ENCODE measurements at regions of chr10 and their contacts with region 1.

Region 1: GRCh38 chr10:22648547-22648961 is 65.8 kb downstream of the PIP4K2A start:
- DNase-seq: peak in 2 of 9 experiments; percentile 42 to 63
- ATAC-seq: no peak
- H3K4me3 ChIP-seq: peak overlapping the region; percentile 3 to 28
- H3K4me3 Mint-ChIP-seq: peak overlapping the region; percentile 81
- H3K27ac ChIP-seq: peak overlapping the region; percentile 17 to 74
- H3K27ac Mint-ChIP-seq: peak overlapping the region; percentile 91
- H3K4me1 ChIP-seq: peaks cover 98% of the 10 kb centered on the region
- H3K4me1 Mint-ChIP-seq: peaks cover 94% of the 10 kb centered on the region
- H3K27me3 ChIP-seq: no peaks in the 10 kb centered on the region
- H3K27me3 Mint-ChIP-seq: no peaks in the 10 kb centered on the region
- CTCF ChIP-seq: no peak

Region 2: DNA sequence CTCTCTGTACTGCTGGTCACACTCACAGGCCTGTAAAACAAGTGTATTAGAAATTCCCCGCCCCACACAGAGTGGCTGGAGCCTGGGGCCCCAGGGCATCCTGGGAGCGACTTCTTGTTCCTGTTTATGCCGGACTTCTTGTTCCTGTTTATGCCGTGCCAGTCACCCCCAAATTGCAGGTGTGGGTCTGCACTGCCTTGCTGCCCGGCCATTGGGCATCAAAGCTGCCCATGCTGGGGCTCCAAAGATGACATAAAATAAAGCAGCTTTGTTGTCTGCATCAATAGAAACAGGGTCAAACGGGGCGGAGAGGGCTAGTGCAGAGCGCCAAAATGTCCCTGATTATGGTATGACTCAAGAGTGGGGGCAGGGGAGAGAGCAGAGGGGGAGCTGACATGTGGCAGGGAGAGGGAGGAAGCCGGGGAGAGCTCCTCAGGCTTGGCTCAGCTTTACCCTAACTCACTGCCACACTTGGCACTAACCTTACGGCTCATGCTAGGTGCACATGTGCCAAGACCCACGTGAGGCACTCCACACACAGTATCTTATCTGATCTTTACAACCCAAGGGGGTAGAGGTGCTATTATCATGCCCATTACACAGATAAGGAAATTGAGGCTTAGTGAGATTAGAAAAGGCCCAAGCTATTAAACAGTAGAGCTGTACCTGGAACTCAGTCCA is 32.6 kb before region 1 on chr10:
- CTCF ChIA-PET with region 1: interaction called, 6 read pairs
- POLR2A ChIA-PET with region 1: interaction called, 11 read pairs
- intact Hi-C with region 1: loop called in 1 of 2 experiments (anchors 2 kb)
- DNase-seq: peak in 5 of 9 experiments; percentile 38 to 85 (median 59)
- ATAC-seq: peak; percentile 20
- H3K4me3 ChIP-seq: peak overlapping the region in 1 of 2 experiments; percentile 15
- H3K4me3 Mint-ChIP-seq: peak overlapping the region; percentile 71
- H3K27ac ChIP-seq: peak overlapping the region; percentile 15 to 90
- H3K27ac Mint-ChIP-seq: peak overlapping the region; percentile 92
- H3K4me1 ChIP-seq: peaks cover 91% of the 10 kb centered on the region
- H3K4me1 Mint-ChIP-seq: peaks cover 98% of the 10 kb centered on the region
- H3K27me3 ChIP-seq: no peaks in the 10 kb centered on the region
- H3K27me3 Mint-ChIP-seq: no peaks in the 10 kb centered on the region
- CTCF ChIP-seq: no peak

Region 3: DNA sequence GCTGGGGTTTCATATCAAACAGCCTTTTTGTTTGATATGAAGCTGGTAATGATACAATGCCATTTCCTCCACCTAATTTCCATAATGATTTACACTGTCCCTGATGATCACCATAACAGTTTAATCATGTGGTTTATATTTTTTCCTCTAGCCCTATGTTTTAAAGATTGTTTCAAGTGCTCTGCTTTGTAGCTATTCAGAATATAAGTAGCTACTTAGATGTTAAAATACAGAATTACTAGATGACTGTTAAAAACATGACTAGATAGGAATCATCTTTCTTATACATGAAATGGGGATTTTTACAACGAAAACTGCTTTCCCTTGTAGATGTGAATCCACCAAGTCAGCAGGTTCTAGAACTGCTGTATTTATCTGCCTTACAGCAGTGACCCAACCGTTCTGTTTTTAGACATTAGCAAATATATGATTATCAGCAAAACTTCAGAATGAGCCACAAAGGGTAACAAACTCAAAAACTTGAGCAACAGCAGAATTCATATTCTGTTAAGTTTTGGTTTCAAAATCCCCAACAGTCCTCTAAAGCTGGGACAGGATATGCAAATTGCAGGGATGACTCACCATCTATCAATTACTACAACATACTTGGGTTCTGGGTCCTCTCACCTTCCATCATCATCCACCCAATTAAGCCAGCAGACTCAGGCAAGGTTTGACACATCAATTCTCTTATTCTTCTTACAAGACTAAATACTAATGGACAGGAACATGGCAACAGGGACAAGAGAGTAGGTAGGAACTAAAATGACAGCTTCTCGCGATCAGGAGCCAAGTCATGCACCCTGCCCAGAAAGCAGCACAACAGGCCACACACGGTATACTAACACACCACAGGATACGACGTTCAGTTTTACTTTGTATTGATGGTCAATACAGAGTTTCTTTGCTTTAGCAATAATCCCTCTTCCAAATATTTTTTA is 18.1 kb before region 1 on chr10:
- CTCF ChIA-PET with region 1: interaction called, 7 read pairs
- POLR2A ChIA-PET with region 1: interaction called, 13 read pairs
- intact Hi-C with region 1: loop called (anchors 1 to 2 kb)
- DNase-seq: peak in 4 of 9 experiments; percentile 39 to 91 (median 68)
- ATAC-seq: peak; percentile 79
- H3K4me3 ChIP-seq: peak overlapping the region; percentile 16 to 21
- H3K4me3 Mint-ChIP-seq: peak overlapping the region; percentile 72
- H3K27ac ChIP-seq: peak overlapping the region; percentile 16 to 81
- H3K27ac Mint-ChIP-seq: peak overlapping the region; percentile 97
- H3K4me1 ChIP-seq: peaks cover 96% of the 10 kb centered on the region
- H3K4me1 Mint-ChIP-seq: peaks cover 96% of the 10 kb centered on the region
- H3K27me3 ChIP-seq: no peaks in the 10 kb centered on the region
- H3K27me3 Mint-ChIP-seq: no peaks in the 10 kb centered on the region
- CTCF ChIP-seq: no peak

Region 4: GRCh38 chr10:22666287-22667092 is 17.9 kb after region 1 on chr10:
- CTCF ChIA-PET with region 1: interaction called, 4 read pairs
- POLR2A ChIA-PET with region 1: interaction called, 8 read pairs
- intact Hi-C with region 1: loop called in 1 of 2 experiments (anchors 2 kb)
- DNase-seq: peak; percentile 30 to 92 (median 67)
- ATAC-seq: peak; percentile 84
- H3K4me3 ChIP-seq: peak overlapping the region; percentile 29 to 42
- H3K4me3 Mint-ChIP-seq: peak overlapping the region; percentile 79
- H3K27ac ChIP-seq: peak overlapping the region; percentile 41 to 67
- H3K27ac Mint-ChIP-seq: peak overlapping the region; percentile 90
- H3K4me1 ChIP-seq: peaks cover 87% of the 10 kb centered on the region
- H3K4me1 Mint-ChIP-seq: peaks cover 83% of the 10 kb centered on the region
- H3K27me3 ChIP-seq: no peaks in the 10 kb centered on the region
- H3K27me3 Mint-ChIP-seq: no peaks in the 10 kb centered on the region
- CTCF ChIP-seq: no peak

Region 5: DNA sequence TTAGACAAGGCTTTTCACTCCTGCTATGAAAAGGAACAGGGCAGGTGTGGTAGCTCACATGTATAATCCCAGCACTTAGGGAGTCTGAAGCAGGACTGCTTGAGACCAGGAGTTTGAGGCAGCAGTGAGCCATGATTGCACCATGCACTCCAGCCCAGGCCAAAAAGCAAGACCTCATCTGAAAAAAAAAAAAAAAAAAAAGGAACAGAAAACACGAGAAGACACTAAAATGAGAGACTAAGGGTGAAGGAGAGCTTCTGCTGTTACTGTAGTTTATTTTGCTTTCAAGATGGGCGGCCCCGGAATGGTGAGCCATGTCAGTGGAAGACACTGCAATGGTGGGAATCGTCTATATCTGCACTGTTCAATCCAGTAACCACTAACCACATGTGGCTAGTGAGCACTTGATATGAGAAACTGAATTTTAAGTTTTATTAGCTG is 55.9 kb after region 1 on chr10:
- CTCF ChIA-PET with region 1: interaction called, 3 read pairs
- POLR2A ChIA-PET with region 1: interaction called, 6 read pairs
- intact Hi-C with region 1: loop called in 1 of 2 experiments (anchors 2 kb)
- DNase-seq: no peak
- ATAC-seq: no peak
- H3K4me3 ChIP-seq: no peak overlapping the region
- H3K4me3 Mint-ChIP-seq: peak overlapping the region; percentile 52
- H3K27ac ChIP-seq: peak overlapping the region in 1 of 2 experiments; percentile 37
- H3K27ac Mint-ChIP-seq: peak overlapping the region; percentile 91
- H3K4me1 ChIP-seq: peaks cover 94% of the 10 kb centered on the region
- H3K4me1 Mint-ChIP-seq: peaks cover 96% of the 10 kb centered on the region
- H3K27me3 ChIP-seq: no peaks in the 10 kb centered on the region
- H3K27me3 Mint-ChIP-seq: no peaks in the 10 kb centered on the region
- CTCF ChIP-seq: no peak

Region 6: DNA sequence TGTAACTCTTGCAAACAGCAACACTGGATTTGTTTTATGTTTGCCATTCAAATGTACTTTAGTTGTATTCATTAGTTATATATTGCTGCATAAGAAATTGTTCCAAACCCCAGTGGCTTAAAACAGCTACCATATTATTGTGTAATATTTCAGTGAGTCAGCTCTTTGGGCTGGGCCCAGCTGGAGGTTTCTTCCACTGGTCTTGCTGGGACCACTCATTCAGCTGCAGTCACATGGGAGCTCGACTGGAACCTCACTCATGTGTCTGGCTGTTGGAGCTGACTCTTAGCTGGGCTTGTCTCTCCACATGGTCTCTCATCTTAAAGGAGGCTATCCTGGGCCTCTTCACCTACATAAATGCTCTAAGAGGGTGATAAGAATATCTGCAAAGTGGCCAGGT is 89.0 kb after region 1 on chr10:
- CTCF ChIA-PET with region 1: no interaction called
- POLR2A ChIA-PET with region 1: no interaction called
- intact Hi-C with region 1: no loop called
- DNase-seq: no peak
- ATAC-seq: no peak
- H3K4me3 ChIP-seq: no peak overlapping the region
- H3K4me3 Mint-ChIP-seq: no peak overlapping the region
- H3K27ac ChIP-seq: no peak overlapping the region
- H3K27ac Mint-ChIP-seq: no peak overlapping the region
- H3K4me1 ChIP-seq: no peaks in the 10 kb centered on the region
- H3K4me1 Mint-ChIP-seq: no peaks in the 10 kb centered on the region
- H3K27me3 ChIP-seq: no peaks in the 10 kb centered on the region
- H3K27me3 Mint-ChIP-seq: no peaks in the 10 kb centered on the region
- CTCF ChIP-seq: no peak

Region 7: DNA sequence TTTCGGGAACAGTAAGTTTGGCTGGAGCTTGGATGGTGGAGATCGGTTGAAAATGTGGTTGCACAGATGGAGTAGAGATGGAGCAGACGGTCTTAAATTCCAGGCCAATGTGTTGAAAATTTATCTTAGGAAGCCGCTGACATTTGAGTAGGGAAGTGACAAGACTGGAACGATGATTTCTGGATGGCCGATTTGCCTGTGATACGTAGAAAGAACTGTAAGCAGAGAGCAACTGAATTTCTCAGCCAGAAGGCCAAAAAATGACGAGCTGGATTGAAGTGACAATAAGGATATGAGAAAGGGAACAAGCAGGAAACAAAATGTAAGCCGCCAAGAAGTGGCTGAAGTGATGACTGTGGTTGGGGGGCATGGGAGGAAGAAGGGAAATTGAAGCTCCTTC is 278.6 kb after region 1 on chr10:
- CTCF ChIA-PET with region 1: no interaction called
- POLR2A ChIA-PET with region 1: no interaction called
- intact Hi-C with region 1: no loop called
- DNase-seq: no peak
- ATAC-seq: no peak
- H3K4me3 ChIP-seq: peak overlapping the region; percentile 38 to 61
- H3K4me3 Mint-ChIP-seq: no peak overlapping the region
- H3K27ac ChIP-seq: no peak overlapping the region
- H3K27ac Mint-ChIP-seq: no peak overlapping the region
- H3K4me1 ChIP-seq: peaks cover 11% of the 10 kb centered on the region
- H3K4me1 Mint-ChIP-seq: no peaks in the 10 kb centered on the region
- H3K27me3 ChIP-seq: peaks cover 3% of the 10 kb centered on the region in 2 experiments
- H3K27me3 Mint-ChIP-seq: peaks cover 3% of the 10 kb centered on the region
- CTCF ChIP-seq: no peak

Region 8: DNA sequence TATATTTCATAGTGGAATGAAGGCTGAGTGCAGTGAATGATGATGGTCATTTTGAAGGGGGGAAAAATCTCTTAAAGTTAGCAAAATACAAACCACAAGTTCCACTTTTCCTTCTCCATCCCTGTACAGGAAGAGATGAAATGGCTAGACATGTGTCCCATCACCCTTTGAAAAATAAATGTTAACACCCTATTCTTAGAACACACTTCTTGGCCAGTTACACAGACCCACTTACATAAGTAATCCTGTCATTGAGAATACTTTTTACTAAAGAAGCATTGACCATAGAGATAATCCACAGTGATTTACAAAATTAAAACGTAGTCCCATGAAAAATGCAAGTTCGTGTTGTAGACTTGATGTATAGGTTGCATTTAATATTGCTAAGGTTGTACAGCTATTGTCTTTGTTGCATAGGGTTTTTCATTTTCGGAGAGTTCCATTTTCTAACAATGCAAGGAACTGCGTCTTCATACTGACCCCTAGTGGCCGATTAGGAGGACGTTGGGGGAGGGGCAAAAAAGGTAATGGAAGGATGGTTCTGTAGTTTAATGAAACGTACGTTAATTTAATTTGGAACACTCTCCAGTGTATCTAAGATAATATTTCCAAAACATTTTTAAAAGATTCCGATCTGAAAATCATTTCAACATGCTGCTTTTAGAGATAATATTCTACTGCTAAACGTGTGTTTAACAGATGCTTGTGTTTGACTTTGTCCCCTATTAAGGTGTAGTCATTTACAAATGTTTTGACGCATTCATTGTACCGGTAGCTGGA is 340.2 kb after region 1 on chr10:
- CTCF ChIA-PET with region 1: interaction called, 4 read pairs
- POLR2A ChIA-PET with region 1: interaction called, 3 read pairs
- intact Hi-C with region 1: loop called in 1 of 2 experiments (anchors 10 kb)
- DNase-seq: peak; percentile 46 to 85 (median 74)
- ATAC-seq: peak; percentile 80
- H3K4me3 ChIP-seq: no peak overlapping the region
- H3K4me3 Mint-ChIP-seq: no peak overlapping the region
- H3K27ac ChIP-seq: no peak overlapping the region
- H3K27ac Mint-ChIP-seq: no peak overlapping the region
- H3K4me1 ChIP-seq: peaks cover 4% of the 10 kb centered on the region
- H3K4me1 Mint-ChIP-seq: peaks cover 14% of the 10 kb centered on the region
- H3K27me3 ChIP-seq: no peaks in the 10 kb centered on the region
- H3K27me3 Mint-ChIP-seq: peaks cover 2% of the 10 kb centered on the region
- CTCF ChIP-seq: peak; percentile 88

Region 9: DNA sequence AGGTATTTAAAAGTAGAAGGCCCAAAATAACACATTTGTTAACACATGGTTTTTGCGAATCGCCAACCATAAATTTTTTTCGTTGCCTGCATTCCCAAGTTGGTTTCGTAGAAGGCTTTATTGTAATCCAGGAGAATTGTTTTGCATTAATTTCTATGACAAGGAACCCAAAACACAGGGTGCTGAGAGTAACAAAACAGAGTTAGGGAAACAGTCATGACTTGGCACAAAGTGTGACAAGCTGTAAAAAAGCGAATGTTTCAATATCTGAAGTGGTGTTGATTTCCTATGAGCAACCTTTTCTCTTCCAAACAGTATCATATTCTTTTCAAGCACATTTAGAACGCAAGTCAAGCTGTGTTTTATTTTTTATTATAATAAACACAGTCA is 632.5 kb after region 1 on chr10:
- CTCF ChIA-PET with region 1: no interaction called
- POLR2A ChIA-PET with region 1: no interaction called
- intact Hi-C with region 1: no loop called
- DNase-seq: no peak
- ATAC-seq: no peak
- H3K4me3 ChIP-seq: no peak overlapping the region
- H3K4me3 Mint-ChIP-seq: no peak overlapping the region
- H3K27ac ChIP-seq: no peak overlapping the region
- H3K27ac Mint-ChIP-seq: no peak overlapping the region
- H3K4me1 ChIP-seq: no peaks in the 10 kb centered on the region
- H3K4me1 Mint-ChIP-seq: no peaks in the 10 kb centered on the region
- H3K27me3 ChIP-seq: peaks cover 3 to 5% of the 10 kb centered on the region in 2 experiments
- H3K27me3 Mint-ChIP-seq: peaks cover 22% of the 10 kb centered on the region
- CTCF ChIP-seq: no peak